ENCODE measurements at regions of chr11 and their contacts with region 1.

Region 1: DNA sequence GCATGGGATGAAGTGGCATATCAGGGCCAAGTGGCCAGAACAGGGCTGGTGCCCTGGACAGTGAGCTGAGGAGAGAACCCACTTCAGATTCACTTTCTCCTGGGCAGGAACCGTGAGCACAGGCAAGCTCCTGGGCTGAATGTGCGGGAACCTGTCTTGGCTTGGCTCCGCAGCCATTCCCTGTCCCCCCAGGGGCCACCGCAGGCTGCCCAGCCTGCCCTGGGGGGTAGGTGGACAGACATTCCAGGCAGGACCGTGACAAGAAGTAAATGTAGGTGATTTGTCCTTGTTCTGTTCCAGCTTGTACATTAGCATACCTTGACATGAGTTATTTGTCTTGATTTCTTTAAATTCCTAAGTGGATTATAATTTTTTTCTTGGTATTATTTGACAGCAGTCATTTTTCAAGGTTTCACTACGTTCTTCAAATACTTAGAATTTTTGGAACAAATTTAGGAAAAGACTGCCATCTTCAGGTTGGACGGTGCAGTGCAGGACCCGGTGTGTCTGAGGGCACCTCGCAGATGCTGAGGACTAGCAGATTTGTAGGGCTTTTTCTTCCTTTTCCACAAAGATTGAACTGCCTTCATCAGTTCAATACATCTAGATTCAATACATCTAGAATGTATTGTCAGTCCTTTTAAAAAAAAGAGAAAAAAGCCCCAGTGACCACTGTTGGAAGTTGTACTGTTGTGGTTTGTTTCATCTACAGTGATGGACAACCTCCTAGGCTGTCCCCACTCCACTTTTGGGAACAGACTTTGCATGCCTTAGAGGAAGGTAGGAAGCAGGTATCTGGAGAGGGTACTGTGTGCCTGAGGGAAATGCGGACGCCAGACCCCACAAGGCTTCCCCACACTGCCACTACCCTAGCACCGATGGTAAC is 115.1 kb upstream of the RASSF10 start:
- DNase-seq: peak; percentile 69 to 84 (median 77)
- ATAC-seq: peak; percentile 80
- H3K4me3 ChIP-seq: no peak overlapping the region
- H3K27ac ChIP-seq: peak overlapping the region; percentile 53 to 63 (median 54)
- H3K4me1 ChIP-seq: peaks cover 29% of the 10 kb centered on the region
- H3K27me3 ChIP-seq: no peaks in the 10 kb centered on the region
- CTCF ChIP-seq: peak; percentile 69 to 97 (median 89)
- POLR2A ChIP-seq: no peak

Region 2: DNA sequence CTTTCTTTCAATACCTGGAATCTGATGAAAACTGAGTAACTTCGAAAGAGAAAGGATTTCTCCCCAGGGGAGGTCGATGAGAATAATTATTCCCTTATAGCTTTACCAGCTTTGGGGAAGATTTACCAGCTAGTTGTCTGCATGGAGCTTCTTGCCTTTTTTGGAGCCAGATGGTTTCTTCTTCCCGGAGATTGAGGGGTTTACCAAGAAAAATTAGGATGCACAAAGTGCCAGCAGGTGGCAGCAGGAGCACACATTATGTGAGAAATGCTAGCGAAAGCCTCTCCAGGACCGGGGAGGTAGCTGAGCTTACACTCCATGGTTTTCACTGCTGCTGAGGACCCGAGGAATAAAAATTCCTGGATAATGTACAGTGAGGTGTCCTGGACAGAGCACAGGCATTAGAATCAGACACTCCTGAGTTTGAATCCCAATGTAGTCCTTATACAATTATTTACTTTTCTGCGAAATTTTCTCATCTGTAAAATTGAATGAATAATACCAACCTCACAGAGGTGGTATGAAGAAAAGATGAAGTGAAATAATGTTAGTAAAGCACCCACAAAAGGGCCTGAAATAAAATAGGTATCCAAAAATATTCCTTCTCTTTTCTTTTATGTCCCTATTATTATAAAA is 562.7 kb before region 1 on chr11:
- intact Hi-C with region 1: loop called (anchors 5 kb)
- DNase-seq: peak; percentile 90 to 94 (median 91)
- ATAC-seq: peak; percentile 96
- H3K4me3 ChIP-seq: no peak overlapping the region
- H3K27ac ChIP-seq: no peak overlapping the region
- H3K4me1 ChIP-seq: peaks cover 8% of the 10 kb centered on the region
- H3K27me3 ChIP-seq: no peaks in the 10 kb centered on the region
- CTCF ChIP-seq: peak; percentile 69 to 94 (median 81)
- POLR2A ChIP-seq: no peak

Region 3: GRCh38 chr11:12508151-12508751 is 385.8 kb before region 1 on chr11:
- intact Hi-C with region 1: no loop called
- DNase-seq: no peak
- ATAC-seq: peak; percentile 21
- H3K4me3 ChIP-seq: no peak overlapping the region
- H3K27ac ChIP-seq: no peak overlapping the region
- H3K4me1 ChIP-seq: no peaks in the 10 kb centered on the region
- H3K27me3 ChIP-seq: no peaks in the 10 kb centered on the region
- CTCF ChIP-seq: no peak
- POLR2A ChIP-seq: no peak